T-cell (primary cell): ENCODE measurements at regions of chr6 and their contacts with region 1.

Region 1: GRCh38 chr6:16688984-16689636 is 72.2 kb downstream of the ATXN1 start:
- DNase-seq: no peak
- ATAC-seq: no peak
- H3K4me3 ChIP-seq: no peak overlapping the region
- H3K4me3 Mint-ChIP-seq: no peak overlapping the region
- H3K27ac ChIP-seq: no peak overlapping the region
- H3K27ac Mint-ChIP-seq: peak overlapping the region; percentile 29 to 90
- H3K4me1 ChIP-seq: peaks cover 5 to 27% of the 10 kb centered on the region in 2 experiments
- H3K4me1 Mint-ChIP-seq: peaks cover 57 to 78% (median 72%) of the 10 kb centered on the region in 3 donors
- H3K27me3 ChIP-seq: no peaks in the 10 kb centered on the region
- H3K27me3 Mint-ChIP-seq: no peaks in the 10 kb centered on the region

Region 2: DNA sequence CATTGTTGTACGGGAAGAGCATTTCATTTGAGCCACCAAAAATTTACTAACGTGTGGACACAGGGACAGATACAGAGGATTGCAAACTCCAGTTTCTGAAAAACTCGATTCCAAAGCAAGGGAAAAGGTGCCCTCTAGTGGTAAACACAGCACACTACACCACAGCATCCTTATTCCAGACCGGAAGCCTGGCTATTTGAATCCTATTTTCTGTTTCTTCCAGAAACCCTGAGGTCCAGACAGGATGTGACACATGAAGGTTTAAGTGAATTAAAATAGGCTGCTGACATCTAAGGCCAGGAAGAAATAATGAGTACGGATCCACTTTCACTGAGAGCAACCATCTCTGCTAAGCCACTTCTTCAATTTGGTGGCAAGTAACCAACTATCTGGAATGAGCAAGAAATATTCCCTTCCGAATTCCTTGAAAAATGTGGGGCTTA is 482.5 kb before region 1 on chr6:
- CTCF ChIA-PET with region 1: no interaction called
- POLR2A ChIA-PET with region 1: no interaction called
- DNase-seq: peak in 22 of 35 experiments; percentile 7 to 68 (median 28)
- ATAC-seq: peak; percentile 45 to 69 (median 54)
- H3K4me3 ChIP-seq: no peak overlapping the region
- H3K4me3 Mint-ChIP-seq: no peak overlapping the region
- H3K27ac ChIP-seq: no peak overlapping the region
- H3K27ac Mint-ChIP-seq: no peak overlapping the region
- H3K4me1 ChIP-seq: no peaks in the 10 kb centered on the region
- H3K4me1 Mint-ChIP-seq: peaks cover 3 to 5% (median 3%) of the 10 kb centered on the region in 3 donors
- H3K27me3 ChIP-seq: peaks cover 0 to 23% of the 10 kb centered on the region in 2 experiments
- H3K27me3 Mint-ChIP-seq: peaks cover 14 to 20% of the 10 kb centered on the region in 2 donors

Region 3: GRCh38 chr6:16670183-16670582 is 18.9 kb before region 1 on chr6:
- CTCF ChIA-PET with region 1: interaction called in 1 of 2 experiments, 3 read pairs
- POLR2A ChIA-PET with region 1: interaction called in 1 of 2 experiments, 11 read pairs
- DNase-seq: no peak
- ATAC-seq: no peak
- H3K4me3 ChIP-seq: no peak overlapping the region
- H3K4me3 Mint-ChIP-seq: peak overlapping the region; percentile 1 to 46 (median 29)
- H3K27ac ChIP-seq: peak overlapping the region; percentile 16
- H3K27ac Mint-ChIP-seq: peak overlapping the region; percentile 85 to 93
- H3K4me1 ChIP-seq: peaks cover 0 to 14% of the 10 kb centered on the region in 2 experiments
- H3K4me1 Mint-ChIP-seq: peaks cover 30 to 63% (median 53%) of the 10 kb centered on the region in 3 donors
- H3K27me3 ChIP-seq: no peaks in the 10 kb centered on the region
- H3K27me3 Mint-ChIP-seq: no peaks in the 10 kb centered on the region

Region 4: DNA sequence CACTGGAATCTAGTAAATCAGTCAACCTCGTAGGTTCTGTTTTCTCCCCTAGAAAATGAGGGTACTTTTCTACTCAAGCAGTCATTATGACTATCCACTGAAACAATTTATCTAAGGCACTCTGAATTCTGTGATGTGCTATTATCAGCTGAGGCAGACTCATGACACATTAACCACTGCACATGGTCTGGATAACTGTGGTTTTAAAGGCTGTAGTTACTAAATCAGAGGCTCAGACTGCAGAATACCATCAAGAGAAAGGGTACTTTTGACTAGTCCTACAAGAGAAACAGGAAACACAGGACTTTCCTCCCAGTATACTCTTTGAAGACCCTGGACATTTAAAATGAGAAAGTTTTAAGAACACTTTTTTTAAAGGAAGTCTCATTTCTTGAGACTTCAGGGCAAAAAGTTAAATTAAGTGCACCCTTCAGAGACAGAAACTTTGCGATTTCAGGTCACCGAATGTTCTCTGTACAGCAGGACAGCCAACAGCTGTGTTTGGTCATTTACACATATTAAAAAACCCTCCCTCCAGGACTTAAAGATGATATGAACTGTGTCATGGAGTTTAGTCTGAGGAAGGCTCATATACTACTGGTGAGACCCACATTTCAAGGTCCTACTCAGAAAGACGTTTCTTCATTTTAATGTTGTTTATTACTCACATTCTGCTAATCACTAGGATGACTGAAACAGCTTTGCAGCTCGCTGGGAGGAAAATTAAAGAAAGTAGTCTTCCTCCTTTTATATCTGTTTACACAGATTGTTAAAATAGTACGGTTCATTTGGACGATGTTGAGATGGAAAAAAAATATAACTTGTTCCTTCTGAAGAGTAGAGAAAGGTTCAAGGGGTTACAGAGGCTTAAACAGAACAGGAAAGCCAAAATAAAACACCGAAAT is 52.3 kb after region 1 on chr6:
- CTCF ChIA-PET with region 1: interaction called in 1 of 2 experiments, 8 read pairs
- POLR2A ChIA-PET with region 1: interaction called in 1 of 2 experiments, 11 read pairs
- DNase-seq: peak in 1 of 35 experiments; percentile 38
- ATAC-seq: peak in 3 of 4 experiments; percentile 27 to 53 (median 52)
- H3K4me3 ChIP-seq: no peak overlapping the region
- H3K4me3 Mint-ChIP-seq: no peak overlapping the region
- H3K27ac ChIP-seq: peak overlapping the region; percentile 3
- H3K27ac Mint-ChIP-seq: peak overlapping the region; percentile 5 to 53
- H3K4me1 ChIP-seq: peaks cover 0 to 12% of the 10 kb centered on the region in 2 experiments
- H3K4me1 Mint-ChIP-seq: peaks cover 34 to 82% (median 74%) of the 10 kb centered on the region in 3 donors
- H3K27me3 ChIP-seq: no peaks in the 10 kb centered on the region
- H3K27me3 Mint-ChIP-seq: no peaks in the 10 kb centered on the region

Region 5: GRCh38 chr6:16836144-16836981 is 147.3 kb after region 1 on chr6:
- CTCF ChIA-PET with region 1: no interaction called
- POLR2A ChIA-PET with region 1: no interaction called
- DNase-seq: peak in 1 of 35 experiments; percentile 22
- ATAC-seq: peak in 1 of 4 experiments; percentile 53
- H3K4me3 ChIP-seq: peak overlapping the region in 1 of 2 donors; percentile 20
- H3K4me3 Mint-ChIP-seq: peak overlapping the region; percentile 34 to 63 (median 55)
- H3K27ac ChIP-seq: peak overlapping the region; percentile 19
- H3K27ac Mint-ChIP-seq: no peak overlapping the region
- H3K4me1 ChIP-seq: peaks cover 2 to 12% of the 10 kb centered on the region in 2 experiments
- H3K4me1 Mint-ChIP-seq: peaks cover 27 to 33% (median 30%) of the 10 kb centered on the region in 3 donors
- H3K27me3 ChIP-seq: no peaks in the 10 kb centered on the region
- H3K27me3 Mint-ChIP-seq: peaks cover 3% of the 10 kb centered on the region in 2 donors